ENCODE measurements at regions of chr15 and their contacts with region 1.

Region 1: GRCh38 chr15:97248376-97248775 is 712.1 kb upstream of the ARRDC4 start:
- DNase-seq: no peak
- CTCF ChIP-seq: no peak

Region 2: GRCh38 chr15:95259513-95259912 is 1988.9 kb before region 1 on chr15:
- CTCF ChIA-PET with region 1: interaction called, 10 read pairs
- POLR2A ChIA-PET with region 1: no interaction called
- DNase-seq: peak; percentile 26
- CTCF ChIP-seq: peak; percentile 61

Region 3: GRCh38 chr15:97215629-97216028 is 32.7 kb before region 1 on chr15:
- CTCF ChIA-PET with region 1: no interaction called
- POLR2A ChIA-PET with region 1: no interaction called
- DNase-seq: no peak
- CTCF ChIP-seq: no peak

Region 4: GRCh38 chr15:97234851-97235610 is 13.3 kb before region 1 on chr15:
- CTCF ChIA-PET with region 1: interaction called, 12 read pairs
- POLR2A ChIA-PET with region 1: no interaction called
- DNase-seq: no peak
- CTCF ChIP-seq: peak; percentile 63

Measured in GM10248 (cell line).